ENCODE measurements at regions of chr11 and their contacts with region 1.

Region 1: GRCh38 chr11:102390667-102391465 is 43.9 kb downstream of the BIRC2 start:
- DNase-seq: peak; percentile 63
- H3K4me3 ChIP-seq: no peak overlapping the region; a peak in 1 of 4 replicates
- H3K27ac ChIP-seq: 0 out of 4 replicates have a peak overlapping the region, but pooled peaks of 1 of the 2 experiments have one; percentile 4
- H3K4me1 ChIP-seq: no peaks in the 10 kb centered on the region; a peak in 1 of 4 replicates
- H3K27me3 ChIP-seq: no peaks in the 10 kb centered on the region
- CTCF ChIP-seq: peak; percentile 83
- EP300 ChIP-seq: no peak
- RAD21 ChIP-seq: peak; percentile 72

Region 2: GRCh38 chr11:102115557-102115956 is 275.3 kb before region 1 on chr11:
- CTCF ChIA-PET with region 1: no interaction called
- POLR2A ChIA-PET with region 1: no interaction called
- DNase-seq: no peak
- H3K4me3 ChIP-seq: no peak overlapping the region; a peak in 1 of 4 replicates
- H3K27ac ChIP-seq: peak overlapping the region; percentile 67 to 97
- H3K4me1 ChIP-seq: peaks cover 0 to 70% of the 10 kb centered on the region in 2 experiments; a peak in 3 of 4 replicates
- H3K27me3 ChIP-seq: no peaks in the 10 kb centered on the region
- CTCF ChIP-seq: no peak
- EP300 ChIP-seq: no peak
- RAD21 ChIP-seq: no peak

Region 3: GRCh38 chr11:102367364-102367763 is 23.5 kb before region 1 on chr11:
- CTCF ChIA-PET with region 1: interaction called, 12 read pairs
- POLR2A ChIA-PET with region 1: no interaction called
- DNase-seq: peak; percentile 35
- H3K4me3 ChIP-seq: no peak overlapping the region
- H3K27ac ChIP-seq: no peak overlapping the region
- H3K4me1 ChIP-seq: no peaks in the 10 kb centered on the region
- H3K27me3 ChIP-seq: no peaks in the 10 kb centered on the region
- CTCF ChIP-seq: peak; percentile 50
- EP300 ChIP-seq: no peak
- RAD21 ChIP-seq: peak; percentile 54

Region 4: DNA sequence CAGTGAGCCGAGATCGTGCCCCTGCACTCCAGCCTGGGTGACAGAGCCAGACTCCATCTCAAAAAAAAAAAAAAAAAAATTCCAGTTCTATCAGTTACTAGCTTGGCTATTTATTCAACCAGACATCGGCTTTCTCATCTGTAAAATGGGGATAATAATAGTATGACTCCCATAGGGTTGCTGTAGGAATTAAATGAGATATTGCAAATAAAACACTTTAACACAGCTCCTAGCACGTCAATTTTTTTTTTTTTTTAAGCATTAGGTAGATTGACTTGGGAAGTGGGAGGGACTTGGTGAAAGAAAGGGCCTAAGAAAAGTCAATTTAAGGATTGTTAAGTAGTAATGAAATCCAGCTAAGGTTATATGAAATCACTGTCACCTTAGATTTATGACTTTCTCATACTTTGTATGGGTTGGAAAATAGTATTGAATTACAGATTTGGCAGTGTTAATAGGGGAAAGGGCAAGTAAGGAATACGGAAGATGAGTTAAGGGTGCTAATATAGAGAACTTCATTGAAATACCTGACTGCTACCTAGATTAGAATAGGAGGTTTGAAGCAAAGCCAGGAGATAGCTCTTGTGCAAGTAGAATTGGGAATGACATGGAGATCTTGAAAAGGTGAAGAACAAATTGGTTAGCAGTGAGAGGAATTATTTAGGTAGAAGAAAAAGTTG is 15.0 kb before region 1 on chr11:
- CTCF ChIA-PET with region 1: interaction called, 23 read pairs
- POLR2A ChIA-PET with region 1: no interaction called
- DNase-seq: no peak
- H3K4me3 ChIP-seq: no peak overlapping the region
- H3K27ac ChIP-seq: no peak overlapping the region
- H3K4me1 ChIP-seq: no peaks in the 10 kb centered on the region; a peak in 1 of 4 replicates
- H3K27me3 ChIP-seq: no peaks in the 10 kb centered on the region
- CTCF ChIP-seq: no peak
- EP300 ChIP-seq: no peak
- RAD21 ChIP-seq: no peak

Region 5: GRCh38 chr11:102401905-102402304 is 11.0 kb after region 1 on chr11:
- CTCF ChIA-PET with region 1: interaction called, 30 read pairs
- POLR2A ChIA-PET with region 1: no interaction called
- DNase-seq: no peak
- H3K4me3 ChIP-seq: no peak overlapping the region
- H3K27ac ChIP-seq: no peak overlapping the region
- H3K4me1 ChIP-seq: no peaks in the 10 kb centered on the region
- H3K27me3 ChIP-seq: no peaks in the 10 kb centered on the region
- CTCF ChIP-seq: no peak
- EP300 ChIP-seq: no peak
- RAD21 ChIP-seq: no peak

Region 6: GRCh38 chr11:102407901-102408300 is 17.0 kb after region 1 on chr11:
- CTCF ChIA-PET with region 1: interaction called, 30 read pairs
- POLR2A ChIA-PET with region 1: no interaction called
- DNase-seq: no peak
- H3K4me3 ChIP-seq: no peak overlapping the region
- H3K27ac ChIP-seq: no peak overlapping the region
- H3K4me1 ChIP-seq: peaks cover 0 to 8% of the 10 kb centered on the region in 2 experiments; a peak in 3 of 4 replicates
- H3K27me3 ChIP-seq: no peaks in the 10 kb centered on the region
- CTCF ChIP-seq: no peak
- EP300 ChIP-seq: no peak
- RAD21 ChIP-seq: no peak

Region 7: GRCh38 chr11:102451041-102451680 is 60.3 kb after region 1 on chr11:
- CTCF ChIA-PET with region 1: interaction called, 11 read pairs
- POLR2A ChIA-PET with region 1: no interaction called
- DNase-seq: no peak
- H3K4me3 ChIP-seq: peak overlapping the region; percentile 81 to 97
- H3K27ac ChIP-seq: peak overlapping the region; percentile 72 to 90
- H3K4me1 ChIP-seq: peaks cover 7 to 19% of the 10 kb centered on the region in 2 experiments; a peak in 3 of 4 replicates
- H3K27me3 ChIP-seq: no peaks in the 10 kb centered on the region
- CTCF ChIP-seq: no peak
- EP300 ChIP-seq: no peak
- RAD21 ChIP-seq: no peak

Region 8: DNA sequence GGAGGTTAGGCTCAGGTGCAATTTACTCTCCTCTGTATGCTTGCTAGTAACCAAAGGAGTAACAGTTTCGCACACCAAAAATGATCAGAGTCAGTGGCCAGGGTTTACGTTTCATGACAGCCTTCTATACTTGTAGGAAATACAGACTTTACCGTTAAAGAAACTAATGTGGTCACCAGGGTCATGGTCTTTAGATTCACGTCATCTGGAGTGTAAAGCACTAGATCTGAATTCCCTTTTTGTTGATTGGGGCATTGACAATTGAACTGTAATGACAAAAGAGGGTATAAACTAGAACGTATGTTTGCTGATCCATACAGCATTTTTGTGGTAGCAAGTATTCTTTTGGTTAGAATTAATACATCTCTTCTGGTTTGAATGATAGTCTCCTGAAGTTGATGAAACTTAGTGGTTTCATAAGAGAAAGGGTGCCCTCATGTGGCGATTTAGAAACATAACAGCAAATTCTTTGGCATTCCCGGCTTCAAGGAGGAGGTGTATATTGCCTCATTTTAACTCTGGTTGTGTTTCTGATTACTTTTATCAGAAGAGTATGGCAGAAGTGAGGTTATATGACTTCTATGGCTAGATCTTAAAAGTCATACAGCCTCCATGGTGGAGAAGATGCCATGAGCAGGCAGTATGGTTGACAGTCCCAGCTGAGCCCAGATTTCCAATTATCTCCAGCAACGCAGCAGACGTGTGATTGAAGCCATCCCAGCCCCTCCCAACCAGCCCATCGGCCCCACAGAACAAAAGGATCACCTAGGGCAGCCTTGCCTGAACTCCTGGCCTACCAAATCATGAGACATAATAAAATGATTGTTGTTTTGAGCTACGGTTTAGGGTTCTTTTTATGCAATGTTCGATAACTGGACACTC is 104.5 kb after region 1 on chr11:
- CTCF ChIA-PET with region 1: interaction called, 29 read pairs
- POLR2A ChIA-PET with region 1: no interaction called
- DNase-seq: peak; percentile 54
- H3K4me3 ChIP-seq: no peak overlapping the region
- H3K27ac ChIP-seq: no peak overlapping the region
- H3K4me1 ChIP-seq: peaks cover 0 to 2% of the 10 kb centered on the region in 2 experiments; a peak in 1 of 4 replicates
- H3K27me3 ChIP-seq: no peaks in the 10 kb centered on the region
- CTCF ChIP-seq: peak; percentile 78
- EP300 ChIP-seq: no peak
- RAD21 ChIP-seq: peak; percentile 90